ENCODE measurements at regions of chr17 and their contacts with region 1.

Region 1: DNA sequence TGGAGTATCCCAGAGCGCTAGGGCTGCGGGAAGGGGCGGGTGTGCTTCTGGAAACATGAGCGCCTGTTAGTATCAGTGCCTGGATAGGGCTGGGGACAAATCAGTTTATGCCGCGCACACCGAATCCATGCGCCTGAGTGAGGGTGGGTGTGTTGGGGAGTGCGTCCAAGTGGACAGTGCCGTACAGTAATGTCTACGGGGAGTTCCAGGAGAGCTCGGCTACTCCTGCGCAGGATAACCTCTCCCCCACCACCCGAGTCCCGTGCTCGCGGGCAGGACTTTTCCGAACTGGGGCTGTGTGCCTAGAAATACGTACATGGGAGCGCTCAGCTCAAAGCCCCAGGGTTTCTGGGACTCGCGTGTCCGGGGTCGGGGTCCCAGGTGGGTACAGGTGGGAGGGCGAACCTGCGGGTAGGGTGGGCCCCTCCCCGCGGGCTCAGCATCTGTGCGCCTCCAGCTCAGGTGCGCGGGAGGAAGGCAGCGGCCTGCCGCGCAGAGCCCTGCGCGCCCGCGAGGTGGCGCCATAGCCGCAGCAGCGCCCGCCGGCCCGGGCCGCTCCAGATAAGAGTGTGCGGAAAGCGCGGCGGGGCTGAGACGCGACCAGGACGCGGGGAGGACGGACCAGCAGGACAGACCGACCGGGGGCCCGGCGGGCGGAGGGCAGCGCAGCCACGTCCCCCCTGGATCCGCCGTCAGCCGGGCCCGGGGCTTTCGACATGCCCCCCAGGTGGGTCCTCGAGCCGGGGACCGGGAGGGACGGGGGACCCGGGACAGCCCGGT is at the start of gene HIC1:
- DNase-seq: peak; percentile 87
- ATAC-seq: peak; percentile 67 to 78
- H3K4me3 ChIP-seq: peak within 1 kb of the TSS; percentile 67
- H3K27ac ChIP-seq: peak within 1 kb of the TSS; percentile 87
- H3K4me1 ChIP-seq: peaks cover 60% of the 10 kb centered on the region
- H3K27me3 ChIP-seq: peaks cover 43% of the 10 kb centered on the region
- CTCF ChIP-seq: peak; percentile 97
- total RNA-seq, gene HIC1: 20.6 TPM

Region 2: DNA sequence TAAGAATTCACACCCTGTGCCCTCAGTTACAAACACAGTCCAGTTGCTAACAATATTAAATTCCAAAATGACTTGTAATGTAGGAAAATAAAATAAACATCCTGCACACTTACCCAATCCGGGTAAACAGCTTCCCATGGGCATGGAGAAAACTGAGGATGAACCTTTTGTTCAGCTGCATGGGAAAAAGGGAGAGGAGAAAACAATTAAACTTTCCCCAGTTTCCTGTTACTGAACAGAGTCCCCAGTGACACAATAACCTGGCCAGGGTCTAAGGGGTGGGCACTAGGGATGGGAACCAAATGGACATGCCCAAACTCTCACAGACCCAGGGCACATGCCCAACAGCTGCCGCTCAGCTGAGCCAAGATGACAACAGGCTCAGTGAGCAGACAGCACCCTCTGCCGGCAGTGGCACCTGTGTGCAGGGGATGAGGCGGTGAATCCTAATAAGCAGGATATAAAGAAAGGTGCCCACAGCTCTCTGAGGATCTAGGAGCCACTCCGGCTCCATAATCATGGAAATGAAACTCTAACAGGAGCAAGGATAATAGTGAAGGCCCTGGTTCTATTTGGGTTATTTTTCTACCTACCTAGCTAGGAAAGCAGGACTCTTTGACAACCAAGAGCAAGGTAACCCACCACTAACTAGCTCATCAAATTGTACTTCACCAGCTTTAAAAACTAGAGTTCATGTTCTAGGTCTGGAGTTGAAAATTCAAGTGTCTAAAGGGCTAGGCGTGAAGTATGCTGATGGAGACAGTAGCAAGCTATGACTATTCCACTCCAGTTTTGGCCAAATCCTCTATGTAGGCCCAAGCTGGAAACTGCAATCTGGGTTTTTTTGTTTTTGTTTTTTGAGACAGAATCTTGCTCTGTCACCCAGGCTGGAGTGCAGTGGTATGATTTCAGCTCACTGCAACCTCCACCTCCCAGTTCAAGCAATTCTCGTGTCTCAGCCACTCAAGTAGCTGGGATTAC is 190.1 kb after region 1 on chr17:
- intact Hi-C with region 1: loop called (anchors 5 kb)
- DNase-seq: peak; percentile 87
- ATAC-seq: peak; percentile 95 to 96
- H3K4me3 ChIP-seq: no peak overlapping the region
- H3K27ac ChIP-seq: peak overlapping the region; percentile 76
- H3K4me1 ChIP-seq: peaks cover 18% of the 10 kb centered on the region
- H3K27me3 ChIP-seq: no peaks in the 10 kb centered on the region
- CTCF ChIP-seq: peak; percentile 98